ENCODE measurements at regions of chr6 and their contacts with region 1.

Region 1: DNA sequence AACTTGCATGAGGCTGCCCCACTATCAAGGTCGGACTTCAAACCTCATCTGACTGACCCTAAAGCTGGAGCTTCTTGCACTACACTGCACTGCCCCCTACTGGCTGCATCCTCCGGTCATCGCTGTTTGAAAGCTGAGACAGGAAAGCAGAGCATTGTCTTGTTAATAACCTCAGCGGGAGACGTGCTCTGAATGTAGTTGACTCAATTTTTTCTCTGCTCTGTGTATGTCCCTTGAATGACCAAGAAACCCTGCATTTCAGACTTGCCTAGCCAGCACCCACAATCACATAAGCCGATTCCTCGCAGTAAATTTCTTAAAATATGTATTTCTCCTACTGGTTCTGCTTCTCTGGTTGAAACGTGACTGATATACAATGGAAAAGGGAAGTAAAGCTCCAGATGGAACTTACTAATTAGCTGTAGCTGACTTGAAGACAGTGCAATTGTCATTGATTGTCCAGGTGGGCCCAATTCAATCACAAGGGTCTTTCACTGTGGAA is 27.8 kb downstream of the TCF21 start:
- DNase-seq: peak; percentile 68 to 89 (median 71)
- ATAC-seq: peak; percentile 94
- H3K4me3 ChIP-seq: no peak overlapping the region
- H3K27ac ChIP-seq: no peak overlapping the region
- H3K4me1 ChIP-seq: no peaks in the 10 kb centered on the region
- H3K27me3 ChIP-seq: no peaks in the 10 kb centered on the region; a peak in 1 of 5 replicates
- CTCF ChIP-seq: peak; percentile 88 to 92 (median 92)
- EP300 ChIP-seq: no peak
- POLR2A ChIP-seq: no peak
- RAD21 ChIP-seq: peak; percentile 90 to 92

Region 2: DNA sequence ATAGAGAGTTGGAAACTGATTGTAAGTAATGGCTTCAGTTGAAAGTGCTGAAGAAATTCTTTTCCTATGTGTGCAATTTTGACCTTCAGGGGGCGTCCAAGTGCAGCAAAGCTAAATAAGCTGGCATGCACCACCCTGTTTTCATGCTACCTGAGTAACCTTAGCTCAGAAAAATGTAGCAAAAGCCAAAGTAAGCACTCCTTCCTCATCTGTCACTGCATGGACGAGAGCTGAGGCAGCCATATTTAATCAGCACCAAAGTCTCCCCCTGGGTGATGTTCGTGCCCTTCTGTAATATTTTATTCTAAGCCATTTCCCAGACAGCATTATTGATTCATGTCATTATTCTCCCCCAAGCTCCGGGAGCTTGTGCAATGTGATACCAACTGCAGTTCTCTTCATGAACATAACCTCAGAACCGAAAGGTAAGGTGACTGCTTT is 979.2 kb before region 1 on chr6:
- CTCF ChIA-PET with region 1: no interaction called
- POLR2A ChIA-PET with region 1: no interaction called
- in situ Hi-C with region 1: no loop called
- intact Hi-C with region 1: loop called (anchors 10 kb)
- DNase-seq: peak; percentile 14 to 54 (median 16)
- ATAC-seq: peak; percentile 79
- H3K4me3 ChIP-seq: no peak overlapping the region
- H3K27ac ChIP-seq: no peak overlapping the region
- H3K4me1 ChIP-seq: no peaks in the 10 kb centered on the region
- H3K27me3 ChIP-seq: peaks cover 4 to 6% of the 10 kb centered on the region in 2 experiments; a peak in 2 of 5 replicates
- CTCF ChIP-seq: peak; percentile 59 to 65 (median 60)
- EP300 ChIP-seq: no peak
- POLR2A ChIP-seq: no peak
- RAD21 ChIP-seq: peak; percentile 40 to 57; a peak in 3 of 4 replicates

Region 3: DNA sequence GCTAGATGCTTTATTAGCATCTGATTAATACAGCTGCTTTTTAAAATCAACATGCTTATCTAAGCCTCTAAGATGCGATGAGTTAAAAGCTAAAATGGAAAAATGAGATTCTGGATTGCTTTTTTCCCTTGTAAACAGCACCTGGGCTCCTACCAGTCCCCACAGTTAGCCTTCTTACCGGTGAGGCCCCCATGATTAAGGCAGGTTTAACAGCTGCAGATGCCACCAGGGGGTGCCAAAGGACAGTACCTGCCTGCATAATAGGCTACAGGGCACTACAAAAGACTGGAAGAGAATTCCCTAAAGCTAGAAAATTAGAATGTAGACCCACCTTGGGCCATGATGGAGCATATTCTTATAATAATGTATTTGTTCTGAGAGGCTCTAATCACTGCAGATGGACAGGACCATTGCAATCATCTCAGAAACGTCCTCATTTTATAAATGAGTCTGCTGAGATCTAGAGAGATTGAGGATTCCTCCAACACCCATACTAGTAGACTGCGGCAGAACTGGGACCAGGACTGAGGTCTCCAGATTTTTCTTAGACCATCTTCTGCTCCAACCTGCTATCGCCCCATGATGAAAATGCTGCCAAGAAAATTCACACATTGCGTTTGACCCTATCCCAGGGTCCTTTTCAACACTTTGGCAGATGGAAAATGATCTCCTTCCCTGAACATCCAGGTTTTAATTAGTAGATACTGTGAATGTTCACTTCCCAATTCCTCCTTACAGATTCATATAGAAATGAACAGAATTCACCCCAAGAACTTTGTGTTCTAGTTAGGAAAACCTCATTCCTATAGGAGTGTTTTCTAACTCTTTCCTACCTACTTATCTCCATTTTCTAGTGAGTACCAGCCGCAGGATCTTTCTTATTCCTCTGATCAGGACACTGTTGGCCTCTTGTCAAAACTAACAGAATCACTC is 953.5 kb before region 1 on chr6:
- CTCF ChIA-PET with region 1: interaction called, 4 read pairs
- POLR2A ChIA-PET with region 1: no interaction called
- in situ Hi-C with region 1: loop called (anchors 25 kb)
- intact Hi-C with region 1: loop called (anchors 1 kb)
- DNase-seq: peak; percentile 58 to 77 (median 63)
- ATAC-seq: peak; percentile 95
- H3K4me3 ChIP-seq: no peak overlapping the region
- H3K27ac ChIP-seq: no peak overlapping the region
- H3K4me1 ChIP-seq: peaks cover 0 to 17% of the 10 kb centered on the region in 2 experiments; a peak in 3 of 5 replicates
- H3K27me3 ChIP-seq: no peaks in the 10 kb centered on the region
- CTCF ChIP-seq: peak; percentile 77 to 84 (median 80)
- EP300 ChIP-seq: no peak
- POLR2A ChIP-seq: no peak
- RAD21 ChIP-seq: peak; percentile 79 to 83

Region 4: DNA sequence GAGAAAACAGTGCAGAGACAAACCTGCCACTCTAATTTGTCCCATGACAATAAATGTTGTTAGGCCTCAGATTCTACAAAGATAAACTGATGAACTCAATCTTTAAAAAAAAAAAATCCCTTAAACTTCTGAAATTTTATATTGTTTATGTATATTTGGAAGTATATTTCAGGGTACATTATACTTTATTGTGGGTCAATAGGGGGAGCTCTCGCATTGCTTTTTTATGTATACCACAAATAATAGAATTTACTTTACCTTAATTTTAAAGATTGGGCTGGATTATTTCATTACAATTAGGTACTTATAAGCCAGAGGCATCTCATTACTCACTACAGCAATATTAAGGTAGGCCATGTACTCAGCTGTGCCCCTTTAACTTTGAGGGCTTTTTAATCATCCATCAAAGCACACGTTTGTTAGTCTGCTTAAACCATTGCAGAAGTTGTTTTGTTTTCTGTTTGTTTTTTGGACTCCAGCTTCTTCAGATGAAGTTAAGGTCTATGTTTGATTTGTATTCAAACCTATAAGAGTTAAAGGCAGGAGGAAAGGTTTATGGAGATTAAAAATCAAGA is 731.8 kb before region 1 on chr6:
- CTCF ChIA-PET with region 1: no interaction called
- POLR2A ChIA-PET with region 1: no interaction called
- in situ Hi-C with region 1: no loop called
- intact Hi-C with region 1: loop called (anchors 10 kb)
- DNase-seq: peak in 1 of 4 experiments; percentile 16
- ATAC-seq: no peak
- H3K4me3 ChIP-seq: no peak overlapping the region
- H3K27ac ChIP-seq: no peak overlapping the region
- H3K4me1 ChIP-seq: no peaks in the 10 kb centered on the region
- H3K27me3 ChIP-seq: no peaks in the 10 kb centered on the region
- CTCF ChIP-seq: peak in 1 of 3 experiments; percentile 40; a peak in 2 of 6 replicates
- EP300 ChIP-seq: no peak
- POLR2A ChIP-seq: no peak
- RAD21 ChIP-seq: peak; percentile 17 to 48; a peak in 3 of 4 replicates

Region 5: GRCh38 chr6:133837801-133838349 is 78.8 kb before region 1 on chr6:
- CTCF ChIA-PET with region 1: interaction called, 3 read pairs
- POLR2A ChIA-PET with region 1: interaction called, 4 read pairs
- in situ Hi-C with region 1: no loop called
- intact Hi-C with region 1: loop called (anchors 1 kb)
- DNase-seq: peak; percentile 61 to 83 (median 68)
- ATAC-seq: peak; percentile 99
- H3K4me3 ChIP-seq: peak overlapping the region; percentile 67
- H3K27ac ChIP-seq: no peak overlapping the region
- H3K4me1 ChIP-seq: peaks cover 0 to 5% of the 10 kb centered on the region in 2 experiments; a peak in 2 of 5 replicates
- H3K27me3 ChIP-seq: no peaks in the 10 kb centered on the region; a peak in 1 of 5 replicates
- CTCF ChIP-seq: peak; percentile 80 to 90 (median 89)
- EP300 ChIP-seq: no peak
- POLR2A ChIP-seq: no peak
- RAD21 ChIP-seq: peak; percentile 58 to 66

Region 6: GRCh38 chr6:134272374-134272773 is 355.7 kb after region 1 on chr6:
- CTCF ChIA-PET with region 1: no interaction called
- POLR2A ChIA-PET with region 1: no interaction called
- in situ Hi-C with region 1: no loop called
- intact Hi-C with region 1: no loop called
- DNase-seq: no peak
- ATAC-seq: no peak
- H3K4me3 ChIP-seq: no peak overlapping the region
- H3K27ac ChIP-seq: no peak overlapping the region
- H3K4me1 ChIP-seq: peaks cover 6 to 9% of the 10 kb centered on the region in 2 experiments; a peak in 3 of 5 replicates
- H3K27me3 ChIP-seq: no peaks in the 10 kb centered on the region
- CTCF ChIP-seq: no peak
- EP300 ChIP-seq: no peak
- POLR2A ChIP-seq: no peak
- RAD21 ChIP-seq: no peak